ENCODE measurements at regions of chr1 and their contacts with region 1.

Region 1: GRCh38 chr1:209106237-209106741 is 477.2 kb upstream of the CAMK1G start:
- DNase-seq: no peak
- ATAC-seq: no peak
- H3K4me3 ChIP-seq: no peak overlapping the region
- H3K27ac ChIP-seq: no peak overlapping the region
- H3K4me1 ChIP-seq: no peaks in the 10 kb centered on the region
- H3K27me3 ChIP-seq: no peaks in the 10 kb centered on the region; a peak in 1 of 5 replicates
- CTCF ChIP-seq: no peak
- EP300 ChIP-seq: no peak
- POLR2A ChIP-seq: no peak
- RAD21 ChIP-seq: no peak

Region 2: GRCh38 chr1:209202830-209203439 is 96.6 kb after region 1 on chr1:
- CTCF ChIA-PET with region 1: no interaction called
- POLR2A ChIA-PET with region 1: no interaction called
- in situ Hi-C with region 1: no loop called
- intact Hi-C with region 1: no loop called
- DNase-seq: peak; percentile 46
- ATAC-seq: peak; percentile 49; the same call in 2 of the 3 replicates
- H3K4me3 ChIP-seq: no peak overlapping the region
- H3K27ac ChIP-seq: no peak overlapping the region
- H3K4me1 ChIP-seq: no peaks in the 10 kb centered on the region
- H3K27me3 ChIP-seq: peaks cover 0 to 15% of the 10 kb centered on the region in 2 experiments; a peak in 2 of 5 replicates
- CTCF ChIP-seq: peak; percentile 62
- EP300 ChIP-seq: no peak
- POLR2A ChIP-seq: no peak
- RAD21 ChIP-seq: no peak

Region 3: DNA sequence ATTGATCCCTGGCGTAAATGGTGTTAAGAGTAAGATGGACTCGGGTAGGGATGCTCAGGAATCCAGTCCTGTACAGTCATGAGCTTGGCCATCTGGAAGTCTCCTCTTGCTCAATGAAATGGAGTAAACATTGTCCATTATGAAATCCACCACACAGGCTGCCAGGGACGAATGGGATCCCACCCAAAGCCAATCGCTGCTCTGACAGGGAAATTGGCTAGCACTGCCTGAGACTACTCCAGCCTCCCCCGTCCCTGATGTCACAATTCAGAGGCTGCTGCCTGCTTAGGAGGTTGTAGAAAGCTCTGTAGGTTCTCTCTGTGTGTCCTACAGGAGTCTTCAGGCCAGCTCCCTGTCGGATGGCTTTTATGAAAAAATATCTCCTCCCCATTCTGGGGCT is 598.3 kb after region 1 on chr1 and contains the start of gene HSD11B1:
- CTCF ChIA-PET with region 1: no interaction called
- POLR2A ChIA-PET with region 1: no interaction called
- in situ Hi-C with region 1: loop called (anchors 25 kb)
- intact Hi-C with region 1: no loop called
- DNase-seq: no peak
- ATAC-seq: no peak
- H3K4me3 ChIP-seq: no peak within 1 kb of the TSS
- H3K27ac ChIP-seq: no peak within 1 kb of the TSS
- H3K4me1 ChIP-seq: no peaks in the 10 kb centered on the region
- H3K27me3 ChIP-seq: no peaks in the 10 kb centered on the region; a peak in 1 of 5 replicates
- CTCF ChIP-seq: no peak
- EP300 ChIP-seq: no peak
- POLR2A ChIP-seq: no peak
- RAD21 ChIP-seq: no peak
- total RNA-seq, gene HSD11B1: not detected in 2 replicates

Measured in HepG2 (cell line).